A673 (cell line): ENCODE measurements at regions of chr7 and their contacts with region 1.

Region 1: DNA sequence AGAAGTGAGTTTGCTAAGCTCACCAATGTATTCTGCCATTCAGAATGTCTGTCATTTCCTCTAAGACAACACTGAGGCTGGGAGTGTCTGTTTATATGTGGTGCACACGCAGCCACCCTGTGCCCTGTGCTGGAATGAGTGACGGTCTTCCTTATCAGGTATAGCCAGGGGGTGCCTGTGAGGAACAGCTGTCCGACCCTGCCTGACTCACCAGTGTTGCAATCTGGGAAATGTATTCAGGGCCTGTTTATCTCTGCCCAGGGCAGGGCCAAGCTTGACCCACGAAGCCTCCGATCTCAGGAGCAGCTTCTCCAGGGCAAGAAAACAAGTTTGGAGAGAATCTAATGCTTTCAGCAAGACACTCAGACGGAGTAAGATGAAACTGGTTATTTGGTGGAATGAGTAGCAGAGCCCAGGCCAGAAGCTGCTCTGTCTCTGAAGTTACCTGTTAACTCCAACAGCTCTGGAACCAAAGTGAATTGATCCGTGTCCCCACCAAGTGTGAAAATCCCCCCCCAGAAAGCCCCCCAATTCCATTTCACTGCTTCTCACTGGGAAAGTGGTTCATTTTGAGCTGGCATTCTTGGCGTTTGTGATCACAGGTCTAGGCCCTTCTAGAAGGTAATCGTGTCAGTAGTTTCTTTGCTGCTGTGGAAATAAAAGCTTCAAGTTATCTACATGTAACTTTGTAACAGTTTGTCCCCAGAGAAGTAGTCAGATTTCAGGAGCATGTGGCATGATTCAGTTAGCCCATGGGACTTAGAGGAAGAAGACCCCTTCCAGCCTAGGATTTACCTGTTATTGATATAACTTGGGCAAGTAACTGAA is 6.1 kb upstream of the UBE2H start:
- DNase-seq: no peak
- H3K4me3 ChIP-seq: no peak overlapping the region
- H3K27ac ChIP-seq: no peak overlapping the region
- H3K4me1 ChIP-seq: no peaks in the 10 kb centered on the region
- H3K27me3 ChIP-seq: no peaks in the 10 kb centered on the region
- CTCF ChIP-seq: no peak

Region 2: GRCh38 chr7:129728875-129729467 is 229.9 kb before region 1 on chr7:
- CTCF ChIA-PET with region 1: no interaction called
- POLR2A ChIA-PET with region 1: no interaction called
- intact Hi-C with region 1: no loop called
- DNase-seq: no peak
- H3K4me3 ChIP-seq: no peak overlapping the region
- H3K27ac ChIP-seq: no peak overlapping the region
- H3K4me1 ChIP-seq: peaks cover 4% of the 10 kb centered on the region
- H3K27me3 ChIP-seq: no peaks in the 10 kb centered on the region
- CTCF ChIP-seq: no peak

Region 3: GRCh38 chr7:130050773-130051125 is 91.9 kb after region 1 on chr7:
- CTCF ChIA-PET with region 1: no interaction called
- POLR2A ChIA-PET with region 1: interaction called, 12 read pairs
- intact Hi-C with region 1: no loop called
- DNase-seq: no peak
- H3K4me3 ChIP-seq: peak overlapping the region; percentile 72
- H3K27ac ChIP-seq: peak overlapping the region; percentile 84
- H3K4me1 ChIP-seq: peaks cover 7% of the 10 kb centered on the region
- H3K27me3 ChIP-seq: no peaks in the 10 kb centered on the region
- CTCF ChIP-seq: no peak